ENCODE measurements at regions of chr2 and their contacts with region 1.

Region 1: DNA sequence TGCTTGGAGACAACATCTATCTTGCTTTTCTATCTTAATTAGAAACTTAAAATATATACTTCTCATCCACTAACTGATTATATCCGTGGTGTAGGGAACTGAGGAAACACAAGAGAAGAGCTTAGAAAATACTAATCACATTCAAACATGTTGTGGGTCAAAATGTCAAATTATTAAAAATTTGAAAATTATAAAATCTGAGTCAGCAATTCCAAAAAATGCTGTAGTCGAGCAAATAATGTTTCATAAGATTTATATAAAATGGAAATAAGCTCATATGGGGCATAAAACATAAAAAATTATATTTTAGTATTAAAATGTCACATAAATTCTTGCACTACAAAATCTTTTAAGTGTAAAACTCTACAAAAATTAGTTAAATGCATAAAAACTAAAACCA is 29.2 kb downstream of the SF3B1 start:
- DNase-seq: no peak
- ATAC-seq: no peak
- H3K4me3 ChIP-seq: no peak overlapping the region
- H3K27ac ChIP-seq: no peak overlapping the region
- H3K4me1 ChIP-seq: no peaks in the 10 kb centered on the region
- H3K27me3 ChIP-seq: no peaks in the 10 kb centered on the region
- CTCF ChIP-seq: no peak
- POLR2A ChIP-seq: no peak
- RAD21 ChIP-seq: no peak

Region 2: DNA sequence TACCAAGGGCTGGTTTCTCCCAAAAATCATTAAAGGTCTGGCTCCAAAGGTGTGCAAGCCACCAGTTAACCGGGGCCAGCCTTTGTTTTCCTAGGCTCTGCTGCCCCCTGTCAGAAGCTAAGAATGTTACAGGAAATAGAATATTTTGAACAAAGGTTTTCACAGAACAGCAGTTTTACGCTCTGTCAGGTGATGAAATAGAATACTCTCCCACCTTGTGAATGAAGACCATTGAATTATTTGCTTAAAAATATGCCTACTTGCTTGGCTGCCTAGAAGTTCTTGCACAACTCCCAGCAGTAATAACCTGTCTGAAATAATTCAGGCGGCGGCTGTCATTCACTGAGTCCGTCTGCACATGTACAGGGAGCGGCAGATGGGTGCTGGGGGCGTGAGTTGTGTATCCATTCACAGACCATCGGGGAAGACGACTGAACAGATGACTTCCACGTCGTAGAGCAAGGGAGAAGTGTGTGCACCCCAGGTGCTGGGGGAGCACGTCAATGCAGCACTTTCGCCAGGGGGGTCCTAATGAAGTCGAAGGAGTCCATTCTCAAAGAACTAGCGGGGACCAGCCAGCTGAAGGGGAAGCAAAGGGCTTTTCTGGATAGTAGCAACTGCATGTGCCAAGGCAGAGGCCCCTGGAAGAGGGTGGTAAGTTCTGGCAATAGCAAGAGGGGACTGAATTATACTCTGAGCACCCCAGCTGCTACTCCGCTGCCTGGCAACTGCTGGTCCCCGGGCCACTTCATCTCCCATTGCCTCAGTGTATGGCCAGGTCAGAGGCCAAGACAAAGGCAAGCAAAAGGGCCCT is 26.9 kb before region 1 on chr2:
- CTCF ChIA-PET with region 1: no interaction called
- POLR2A ChIA-PET with region 1: no interaction called
- RAD21 ChIA-PET with region 1: no interaction called
- intact Hi-C with region 1: no loop called
- DNase-seq: peak; percentile 37
- ATAC-seq: peak; percentile 86
- H3K4me3 ChIP-seq: no peak overlapping the region
- H3K27ac ChIP-seq: no peak overlapping the region
- H3K4me1 ChIP-seq: no peaks in the 10 kb centered on the region
- H3K27me3 ChIP-seq: no peaks in the 10 kb centered on the region
- CTCF ChIP-seq: peak; percentile 64 to 93 (median 78)
- POLR2A ChIP-seq: no peak
- RAD21 ChIP-seq: peak; percentile 96

Region 3: DNA sequence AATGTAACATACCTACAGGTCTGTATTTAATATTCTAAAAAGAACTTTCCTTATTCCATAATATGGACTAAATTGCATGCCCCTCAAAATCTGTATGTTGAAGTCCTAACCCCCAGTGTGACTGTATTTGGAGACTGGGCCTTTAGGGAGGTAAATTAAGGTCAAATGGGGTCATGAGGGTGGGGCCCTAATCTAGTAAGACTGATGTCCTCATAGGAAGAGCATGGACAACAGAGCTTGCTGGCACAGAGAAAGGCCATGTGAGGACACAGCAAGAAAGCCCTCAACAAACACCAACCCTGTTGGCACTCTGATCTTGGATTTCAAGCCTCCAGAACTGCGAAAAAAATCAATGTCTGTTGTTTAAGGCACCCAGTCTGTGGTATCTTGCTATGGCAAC is 10.7 kb after region 1 on chr2:
- CTCF ChIA-PET with region 1: no interaction called
- POLR2A ChIA-PET with region 1: interaction called, 6 read pairs
- RAD21 ChIA-PET with region 1: no interaction called
- intact Hi-C with region 1: loop called (anchors 2 kb)
- DNase-seq: no peak
- ATAC-seq: no peak
- H3K4me3 ChIP-seq: no peak overlapping the region
- H3K27ac ChIP-seq: no peak overlapping the region
- H3K4me1 ChIP-seq: no peaks in the 10 kb centered on the region
- H3K27me3 ChIP-seq: no peaks in the 10 kb centered on the region
- CTCF ChIP-seq: no peak
- POLR2A ChIP-seq: no peak
- RAD21 ChIP-seq: no peak

Region 4: GRCh38 chr2:197477797-197478196 is 72.2 kb after region 1 on chr2:
- CTCF ChIA-PET with region 1: no interaction called
- POLR2A ChIA-PET with region 1: no interaction called
- RAD21 ChIA-PET with region 1: no interaction called
- intact Hi-C with region 1: loop called (anchors 5 kb)
- DNase-seq: no peak
- ATAC-seq: no peak
- H3K4me3 ChIP-seq: no peak overlapping the region
- H3K27ac ChIP-seq: no peak overlapping the region
- H3K4me1 ChIP-seq: no peaks in the 10 kb centered on the region
- H3K27me3 ChIP-seq: no peaks in the 10 kb centered on the region
- CTCF ChIP-seq: no peak
- POLR2A ChIP-seq: no peak
- RAD21 ChIP-seq: no peak

Measured in HCT116 (cell line).